ENCODE measurements at regions of chr11 and their contacts with region 1.

Region 1: DNA sequence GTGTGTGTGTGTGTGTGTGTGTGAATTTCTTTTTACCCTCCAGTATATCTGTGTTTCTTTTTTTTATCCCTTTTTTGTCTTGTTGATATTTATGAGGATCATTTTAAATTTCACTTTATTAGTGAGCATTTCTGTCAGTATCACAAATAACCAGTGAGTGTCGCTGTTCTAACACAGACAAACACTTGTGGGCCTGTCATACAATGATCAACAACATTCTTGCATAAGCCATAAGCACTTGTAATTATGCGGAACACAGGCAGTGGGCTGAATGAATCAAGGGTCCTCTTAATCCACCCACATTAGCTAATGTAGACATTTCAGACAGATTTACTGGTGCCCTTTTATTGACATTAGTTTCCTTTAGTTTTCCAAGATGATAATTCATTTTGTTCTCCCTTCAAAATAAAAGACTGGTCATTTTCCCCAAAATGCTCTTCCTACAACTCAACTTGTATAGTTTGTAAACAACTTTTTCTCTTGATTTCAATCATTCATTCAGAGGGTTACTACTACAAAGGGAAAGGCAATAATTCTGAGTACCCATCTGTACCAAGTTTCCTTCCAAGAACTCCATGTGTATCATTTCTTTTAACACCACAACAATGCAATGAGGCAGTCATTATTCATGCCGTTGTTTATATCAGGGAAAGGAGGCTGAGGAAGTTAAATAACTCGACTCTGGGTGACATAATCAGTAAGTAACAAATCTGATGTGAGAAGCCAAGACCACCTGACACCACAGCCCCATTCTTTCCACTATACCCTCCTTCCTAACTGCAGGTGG is 34.5 kb upstream of the ANO3 start:
- DNase-seq: peak; percentile 2
- ATAC-seq: no peak
- H3K4me3 ChIP-seq: no peak overlapping the region
- H3K27ac ChIP-seq: no peak overlapping the region
- H3K4me1 ChIP-seq: no peaks in the 10 kb centered on the region
- H3K27me3 ChIP-seq: no peaks in the 10 kb centered on the region
- CTCF ChIP-seq: peak; percentile 8 to 52 (median 29); a peak in 3 of 6 replicates
- POLR2A ChIP-seq: no peak
- RAD21 ChIP-seq: peak; percentile 26; the same call in 1 of the 2 replicates

Region 2: DNA sequence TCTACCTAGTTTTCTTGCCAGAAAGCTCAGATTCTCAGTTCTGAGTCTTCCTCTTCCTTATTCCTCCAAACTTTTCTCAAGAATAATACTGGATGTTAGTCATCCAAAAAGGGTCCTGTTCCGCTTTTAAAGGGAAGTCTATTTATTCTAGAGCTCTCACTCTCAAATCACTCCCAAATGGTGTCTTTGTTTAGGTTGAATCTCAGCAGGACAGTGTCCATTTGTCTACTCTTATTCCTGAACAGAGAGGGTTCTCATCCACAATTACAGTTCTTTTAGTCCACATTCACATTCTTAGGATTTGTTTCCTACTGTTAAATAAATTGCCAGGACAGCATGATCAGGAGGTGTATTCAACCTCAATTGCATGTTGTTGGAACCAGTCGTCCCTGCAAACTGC is 213.4 kb after region 1 on chr11:
- CTCF ChIA-PET with region 1: no interaction called
- POLR2A ChIA-PET with region 1: no interaction called
- RAD21 ChIA-PET with region 1: no interaction called
- intact Hi-C with region 1: no loop called
- DNase-seq: no peak
- ATAC-seq: no peak
- H3K4me3 ChIP-seq: no peak overlapping the region
- H3K27ac ChIP-seq: no peak overlapping the region
- H3K4me1 ChIP-seq: no peaks in the 10 kb centered on the region
- H3K27me3 ChIP-seq: no peaks in the 10 kb centered on the region
- CTCF ChIP-seq: no peak
- POLR2A ChIP-seq: no peak
- RAD21 ChIP-seq: no peak

Region 3: GRCh38 chr11:26649884-26650283 is 352.5 kb after region 1 on chr11:
- CTCF ChIA-PET with region 1: no interaction called
- POLR2A ChIA-PET with region 1: no interaction called
- RAD21 ChIA-PET with region 1: no interaction called
- intact Hi-C with region 1: loop called (anchors 10 kb)
- DNase-seq: peak; percentile 3
- ATAC-seq: peak; percentile 61; the same call in 1 of the 2 replicates
- H3K4me3 ChIP-seq: no peak overlapping the region
- H3K27ac ChIP-seq: no peak overlapping the region
- H3K4me1 ChIP-seq: no peaks in the 10 kb centered on the region
- H3K27me3 ChIP-seq: no peaks in the 10 kb centered on the region
- CTCF ChIP-seq: peak in 2 of 3 experiments; percentile 48 to 56; a peak in 3 of 6 replicates
- POLR2A ChIP-seq: no peak
- RAD21 ChIP-seq: peak; percentile 20; the same call in 1 of the 2 replicates

Region 4: GRCh38 chr11:26820739-26821138 is 523.4 kb after region 1 on chr11:
- CTCF ChIA-PET with region 1: no interaction called
- POLR2A ChIA-PET with region 1: no interaction called
- RAD21 ChIA-PET with region 1: no interaction called
- intact Hi-C with region 1: no loop called
- DNase-seq: no peak
- ATAC-seq: no peak
- H3K4me3 ChIP-seq: no peak overlapping the region
- H3K27ac ChIP-seq: no peak overlapping the region
- H3K4me1 ChIP-seq: no peaks in the 10 kb centered on the region
- H3K27me3 ChIP-seq: no peaks in the 10 kb centered on the region
- CTCF ChIP-seq: no peak
- POLR2A ChIP-seq: no peak
- RAD21 ChIP-seq: no peak

Measured in HCT116 (cell line).